CD4-positive, alpha-beta memory T cell (primary cell): ENCODE measurements at regions of chr17 and their contacts with region 1.

Region 1: DNA sequence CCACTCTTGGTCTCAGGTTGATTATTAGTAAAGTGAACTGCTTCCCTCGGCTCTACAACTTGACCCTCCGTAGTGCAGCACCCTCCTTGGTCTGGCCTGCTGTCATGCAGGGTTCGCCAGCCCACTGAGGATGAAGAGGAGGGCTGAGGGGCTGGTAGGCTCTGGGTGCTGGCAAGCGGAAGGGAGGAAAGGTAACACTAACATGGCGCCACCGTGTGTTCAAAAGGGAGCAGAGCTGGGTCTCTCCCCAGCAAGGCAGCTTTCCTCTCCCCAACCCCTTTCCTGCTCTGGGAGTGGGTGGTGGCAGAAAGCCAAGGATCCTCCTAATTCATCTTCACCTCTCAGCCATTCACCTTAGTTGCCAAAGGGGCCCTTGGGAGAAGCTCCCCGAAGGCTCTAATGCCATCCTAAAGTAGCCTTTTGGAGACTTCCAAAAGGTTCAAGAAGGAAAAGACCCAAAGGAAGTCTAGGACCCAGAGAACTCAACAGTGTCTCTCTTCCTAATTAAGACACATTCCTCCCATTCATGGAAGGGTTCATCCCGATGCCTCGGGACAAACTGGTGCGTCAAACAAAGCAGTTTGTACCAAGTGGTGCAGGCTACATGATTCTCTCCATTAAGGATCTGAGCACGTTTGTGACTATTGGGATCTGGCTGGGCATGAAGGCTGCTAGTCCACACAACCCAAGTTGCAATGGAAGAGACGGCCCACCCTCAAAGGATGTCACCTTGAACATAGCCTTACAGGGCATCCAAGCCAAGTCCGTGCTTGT is 90.8 kb upstream of the TOB1 start:
- DNase-seq: peak; percentile 64 to 69 (median 65)
- H3K4me3 ChIP-seq: no peak overlapping the region
- H3K4me3 Mint-ChIP-seq: peak overlapping the region in 2 of 8 donors; percentile 40 to 67
- H3K27ac ChIP-seq: no peak overlapping the region
- H3K27ac Mint-ChIP-seq: peak overlapping the region in 6 of 7 donors; percentile 32 to 89 (median 76)
- H3K4me1 ChIP-seq: peaks cover 4% of the 10 kb centered on the region
- H3K4me1 Mint-ChIP-seq: peaks cover 1 to 5% (median 4%) of the 10 kb centered on the region in 4 donors
- H3K27me3 ChIP-seq: no peaks in the 10 kb centered on the region
- H3K27me3 Mint-ChIP-seq: peaks cover 0 to 2% of the 10 kb centered on the region in 2 donors

Region 2: DNA sequence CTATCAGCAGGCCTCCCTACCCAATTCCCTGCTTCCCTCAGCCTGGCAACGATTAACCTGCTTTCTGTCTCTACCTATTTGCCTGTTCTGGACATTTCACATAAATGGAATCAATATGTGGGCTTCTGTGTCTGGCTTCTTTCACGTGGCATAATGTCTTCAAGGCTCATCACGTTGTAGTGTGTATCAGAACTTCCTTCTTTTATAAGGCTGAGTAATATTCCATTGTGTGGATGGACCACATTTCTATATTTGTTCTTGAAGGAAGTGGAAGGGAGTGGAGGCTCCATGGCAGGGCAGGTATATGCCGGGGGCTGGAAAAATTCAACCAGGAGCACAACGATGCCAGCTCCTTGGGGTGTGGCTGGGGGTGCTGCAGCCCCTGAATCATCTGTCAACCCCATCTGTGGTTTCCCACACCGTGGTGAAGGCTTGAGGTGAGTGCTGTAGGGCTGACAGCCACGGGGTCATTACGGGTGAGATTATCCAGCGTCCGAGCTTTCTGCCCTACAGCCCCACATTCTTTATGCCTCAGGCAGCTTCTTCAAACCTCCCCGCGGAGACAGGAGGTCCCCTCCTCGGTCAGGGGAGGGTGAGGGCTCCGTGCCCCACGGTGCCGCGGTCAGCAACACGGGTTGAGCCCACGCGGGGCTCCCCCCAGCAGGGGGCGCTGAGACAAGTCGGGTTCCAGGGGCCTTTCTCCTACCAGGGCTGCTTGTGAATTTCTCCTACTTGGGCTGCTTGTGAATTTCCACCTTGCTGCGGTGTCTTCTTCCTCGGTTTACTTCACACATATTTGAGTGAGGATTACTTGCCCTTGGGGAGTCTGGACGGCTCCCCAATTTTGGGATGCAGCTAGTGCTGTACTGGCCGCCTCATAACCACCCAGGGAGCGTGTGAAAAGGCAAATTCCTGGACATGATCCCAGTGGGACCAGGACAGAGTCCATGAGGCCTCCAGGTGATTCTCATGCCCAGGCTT is 139.9 kb before region 1 on chr17:
- CTCF ChIA-PET with region 1: interaction called, 7 read pairs
- POLR2A ChIA-PET with region 1: no interaction called
- intact Hi-C with region 1: loop called (anchors 1 kb)
- DNase-seq: peak in 4 of 5 donors; percentile 40 to 57 (median 52)
- H3K4me3 ChIP-seq: no peak overlapping the region
- H3K4me3 Mint-ChIP-seq: peak overlapping the region in 4 of 8 donors; percentile 9 to 61 (median 18)
- H3K27ac ChIP-seq: no peak overlapping the region
- H3K27ac Mint-ChIP-seq: peak overlapping the region in 1 of 7 donors; percentile 1
- H3K4me1 ChIP-seq: peaks cover 6% of the 10 kb centered on the region
- H3K4me1 Mint-ChIP-seq: peaks cover 3 to 10% (median 5%) of the 10 kb centered on the region in 4 donors
- H3K27me3 ChIP-seq: no peaks in the 10 kb centered on the region
- H3K27me3 Mint-ChIP-seq: peaks cover 0 to 12% of the 10 kb centered on the region in 2 donors

Region 3: DNA sequence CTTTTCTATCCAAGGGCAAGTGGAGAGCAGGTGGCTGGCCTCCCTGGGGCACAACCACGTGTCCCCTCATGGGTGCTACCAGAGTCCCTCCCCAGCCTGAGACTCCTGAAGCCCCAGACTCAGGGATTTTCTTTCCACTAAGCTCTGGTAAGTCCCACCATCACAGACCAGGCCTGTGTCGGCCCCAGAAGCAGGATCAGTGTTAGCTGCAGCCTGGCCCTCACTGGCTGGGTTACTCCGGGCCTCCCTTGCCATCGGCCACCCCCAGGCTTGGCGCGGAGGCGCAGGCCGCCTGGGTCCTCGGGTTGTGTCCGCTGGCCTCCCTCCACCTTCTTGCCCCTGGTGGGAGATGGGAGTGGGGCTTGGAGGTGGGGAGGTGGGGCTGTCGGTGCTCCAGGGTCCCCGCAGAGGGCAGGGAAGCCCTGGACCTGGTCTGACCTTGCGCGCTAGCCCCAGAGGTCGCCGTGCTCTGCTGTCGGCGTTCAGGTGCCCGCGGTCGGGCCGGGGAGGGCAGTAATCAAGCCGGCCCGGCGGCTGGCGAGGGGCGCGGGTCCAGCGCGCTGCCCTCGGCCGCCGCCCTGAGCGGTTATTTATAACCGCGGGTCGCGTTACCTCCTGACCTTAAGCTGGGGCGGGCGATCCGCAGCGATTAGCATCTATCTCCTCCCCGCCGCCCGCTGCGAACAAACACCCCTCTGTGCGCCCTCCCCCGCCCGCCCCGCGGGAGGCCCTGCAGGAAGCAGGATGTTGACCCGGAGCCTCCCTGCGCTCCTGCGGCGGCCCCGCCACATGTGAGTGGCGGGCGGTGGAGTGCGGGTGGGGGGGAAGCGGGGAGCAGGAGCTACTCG is 12.7 kb before region 1 on chr17:
- CTCF ChIA-PET with region 1: interaction called, 17 read pairs
- POLR2A ChIA-PET with region 1: interaction called, 8 read pairs
- intact Hi-C with region 1: no loop called
- DNase-seq: peak; percentile 73 to 82 (median 76)
- H3K4me3 ChIP-seq: peak overlapping the region; percentile 46 to 49
- H3K4me3 Mint-ChIP-seq: peak overlapping the region; percentile 79 to 88 (median 84)
- H3K27ac ChIP-seq: peak overlapping the region; percentile 73
- H3K27ac Mint-ChIP-seq: peak overlapping the region; percentile 87 to 94 (median 93)
- H3K4me1 ChIP-seq: peaks cover 40% of the 10 kb centered on the region
- H3K4me1 Mint-ChIP-seq: peaks cover 21 to 52% (median 36%) of the 10 kb centered on the region in 4 donors
- H3K27me3 ChIP-seq: no peaks in the 10 kb centered on the region
- H3K27me3 Mint-ChIP-seq: no peaks in the 10 kb centered on the region

Region 4: GRCh38 chr17:51056813-51057510 is 100.0 kb after region 1 on chr17:
- CTCF ChIA-PET with region 1: no interaction called
- POLR2A ChIA-PET with region 1: no interaction called
- intact Hi-C with region 1: no loop called
- DNase-seq: peak; percentile 31 to 49 (median 43)
- H3K4me3 ChIP-seq: no peak overlapping the region
- H3K4me3 Mint-ChIP-seq: no peak overlapping the region
- H3K27ac ChIP-seq: no peak overlapping the region
- H3K27ac Mint-ChIP-seq: peak overlapping the region in 1 of 7 donors; percentile 19
- H3K4me1 ChIP-seq: no peaks in the 10 kb centered on the region
- H3K4me1 Mint-ChIP-seq: peaks cover 6 to 22% (median 13%) of the 10 kb centered on the region in 4 donors
- H3K27me3 ChIP-seq: no peaks in the 10 kb centered on the region
- H3K27me3 Mint-ChIP-seq: no peaks in the 10 kb centered on the region